HEK293 (cell line): ENCODE measurements at regions of chr10 and their contacts with region 1.

Region 1: DNA sequence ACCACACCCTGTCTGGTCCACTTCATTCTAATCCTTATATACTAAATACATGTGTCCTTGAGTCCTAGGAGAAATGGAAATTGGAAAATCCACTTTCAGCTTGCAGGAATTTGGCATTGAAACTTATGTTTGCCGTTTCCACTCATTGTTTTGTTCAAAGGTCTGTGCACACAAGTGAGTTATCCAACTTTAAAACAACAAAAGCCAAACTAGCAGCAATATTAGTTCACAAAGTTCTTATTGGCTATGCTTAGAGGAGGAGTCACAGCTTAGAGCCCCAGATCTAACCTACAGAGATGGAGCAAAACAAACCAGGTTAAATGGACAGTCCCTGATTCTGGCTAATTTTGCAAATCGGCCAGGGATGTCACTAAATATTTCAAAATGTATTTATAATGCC is 44.6 kb upstream of the AFAP1L2 start:
- H3K4me3 ChIP-seq: no peak overlapping the region
- H3K27ac ChIP-seq: no peak overlapping the region
- H3K4me1 ChIP-seq: no peaks in the 10 kb centered on the region
- CTCF ChIP-seq: no peak

Region 2: DNA sequence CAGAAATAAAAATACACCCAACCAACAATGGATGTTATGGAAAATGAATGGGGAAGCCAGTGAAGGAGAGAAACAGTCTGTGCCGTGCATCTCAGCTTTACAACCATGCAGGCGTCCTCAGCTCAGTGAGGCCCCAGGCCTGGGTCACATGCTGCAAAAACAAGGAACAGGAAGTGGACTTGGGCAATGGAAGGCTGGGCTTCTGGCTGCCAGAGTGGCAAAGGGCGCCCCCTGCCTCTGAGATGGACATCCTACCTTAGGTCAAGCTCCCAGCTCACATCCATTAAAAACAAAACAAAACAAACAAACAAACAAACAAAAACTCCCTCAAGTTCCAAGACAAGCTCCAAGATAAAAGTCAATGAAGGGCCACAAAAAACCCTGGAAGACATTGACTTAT is 10.1 kb after region 1 on chr10:
- CTCF ChIA-PET with region 1: interaction called, 13 read pairs
- POLR2A ChIA-PET with region 1: no interaction called
- H3K4me3 ChIP-seq: no peak overlapping the region
- H3K27ac ChIP-seq: no peak overlapping the region
- H3K4me1 ChIP-seq: no peaks in the 10 kb centered on the region
- CTCF ChIP-seq: no peak

Region 3: DNA sequence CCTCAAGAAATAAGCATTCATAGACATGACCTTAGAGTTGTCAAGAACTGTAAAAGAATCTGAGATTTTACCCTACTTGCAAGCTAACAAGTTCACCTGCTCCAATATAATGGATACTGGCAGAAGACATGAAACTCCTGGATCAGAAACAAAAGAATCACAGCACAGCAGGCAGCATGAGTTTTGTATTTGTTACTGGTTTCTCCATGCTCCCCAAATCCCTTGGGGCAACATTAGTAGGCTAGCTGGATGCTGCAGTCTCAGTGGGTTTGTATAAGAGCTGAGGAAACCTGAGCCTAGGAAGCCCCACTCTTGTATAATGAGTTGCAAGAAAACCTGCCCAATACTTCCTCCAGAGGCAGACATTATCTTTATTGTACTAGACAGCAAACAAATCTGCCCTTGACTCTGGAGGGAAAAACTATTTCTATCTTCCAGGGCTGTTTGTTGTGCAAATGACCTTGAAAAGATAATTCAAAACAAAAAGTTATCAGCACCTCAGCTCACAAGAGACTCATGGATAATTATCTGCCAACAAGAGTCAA is 144.4 kb after region 1 on chr10:
- CTCF ChIA-PET with region 1: no interaction called
- POLR2A ChIA-PET with region 1: no interaction called
- H3K4me3 ChIP-seq: no peak overlapping the region
- H3K27ac ChIP-seq: no peak overlapping the region
- H3K4me1 ChIP-seq: no peaks in the 10 kb centered on the region
- CTCF ChIP-seq: no peak